ENCODE measurements at regions of chr13 and their contacts with region 1.

Region 1: GRCh38 chr13:78978381-78978998 is 319.5 kb upstream of the OBI1 start:
- DNase-seq: peak; percentile 35
- H3K4me3 ChIP-seq: no peak overlapping the region
- H3K27ac ChIP-seq: no peak overlapping the region
- H3K4me1 ChIP-seq: no peaks in the 10 kb centered on the region
- H3K27me3 ChIP-seq: no peaks in the 10 kb centered on the region
- CTCF ChIP-seq: peak in 3 of 4 experiments; percentile 61 to 67 (median 63)
- POLR2A ChIP-seq: no peak

Region 2: GRCh38 chr13:78137404-78138142 is 840.9 kb before region 1 on chr13:
- intact Hi-C with region 1: loop called (anchors 5 kb)
- DNase-seq: peak; percentile 11
- H3K4me3 ChIP-seq: no peak overlapping the region
- H3K27ac ChIP-seq: no peak overlapping the region
- H3K4me1 ChIP-seq: no peaks in the 10 kb centered on the region
- H3K27me3 ChIP-seq: no peaks in the 10 kb centered on the region
- CTCF ChIP-seq: peak in 3 of 4 experiments; percentile 43 to 57 (median 43)
- POLR2A ChIP-seq: no peak

Region 3: GRCh38 chr13:78759704-78760103 is 218.8 kb before region 1 on chr13:
- intact Hi-C with region 1: no loop called
- DNase-seq: no peak
- H3K4me3 ChIP-seq: no peak overlapping the region
- H3K27ac ChIP-seq: no peak overlapping the region
- H3K4me1 ChIP-seq: no peaks in the 10 kb centered on the region
- H3K27me3 ChIP-seq: no peaks in the 10 kb centered on the region
- CTCF ChIP-seq: no peak
- POLR2A ChIP-seq: no peak

Measured in prostate gland (tissue), 2 donors.